Heart right ventricle (tissue), 16 donors: ENCODE measurements at regions of chr4 and their contacts with region 1.

Region 1: GRCh38 chr4:139734875-139735380 is 69.3 kb downstream of the MGST2 start:
- DNase-seq: peak; percentile 90 to 91
- ATAC-seq: peak; percentile 94 to 97 (median 94)
- H3K4me3 ChIP-seq: peak overlapping the region; percentile 34 to 66 (median 59)
- H3K27ac ChIP-seq: peak overlapping the region; percentile 78 to 93 (median 86)
- H3K4me1 ChIP-seq: peaks cover 11 to 62% (median 50%) of the 10 kb centered on the region in 9 donors
- H3K27me3 ChIP-seq: no peaks in the 10 kb centered on the region
- CTCF ChIP-seq: peak; percentile 81 to 98 (median 92)

Region 2: GRCh38 chr4:139660568-139661043 is 74.3 kb before region 1 on chr4:
- intact Hi-C with region 1: loop called in 1 of 10 experiments (anchors 5 kb)
- DNase-seq: no peak
- ATAC-seq: peak in 5 of 8 donors; percentile 33 to 63 (median 43)
- H3K4me3 ChIP-seq: no peak overlapping the region
- H3K27ac ChIP-seq: peak overlapping the region in 5 of 10 donors; percentile 32 to 75 (median 42)
- H3K4me1 ChIP-seq: peaks cover 0 to 54% (median 33%) of the 10 kb centered on the region in 9 donors
- H3K27me3 ChIP-seq: no peaks in the 10 kb centered on the region
- CTCF ChIP-seq: no peak

Region 3: GRCh38 chr4:139919521-139919920 is 184.6 kb after region 1 on chr4:
- intact Hi-C with region 1: loop called in 1 of 10 experiments (anchors 5 kb)
- DNase-seq: peak in 1 of 2 donors; percentile 33
- ATAC-seq: peak in 7 of 8 donors; percentile 58 to 87 (median 80)
- H3K4me3 ChIP-seq: peak overlapping the region in 1 of 10 donors; percentile 15
- H3K27ac ChIP-seq: peak overlapping the region; percentile 35 to 88 (median 76)
- H3K4me1 ChIP-seq: peaks cover 15 to 88% (median 66%) of the 10 kb centered on the region in 9 donors
- H3K27me3 ChIP-seq: no peaks in the 10 kb centered on the region
- CTCF ChIP-seq: no peak

Region 4: GRCh38 chr4:140012688-140013486 is 278.0 kb after region 1 on chr4:
- intact Hi-C with region 1: loop called in 3 of 10 experiments (anchors 5 to 10 kb)
- DNase-seq: peak; percentile 19 to 66
- ATAC-seq: peak; percentile 44 to 94 (median 89)
- H3K4me3 ChIP-seq: peak overlapping the region in 1 of 10 donors; percentile 17
- H3K27ac ChIP-seq: no peak overlapping the region
- H3K4me1 ChIP-seq: peaks cover 0 to 12% (median 0%) of the 10 kb centered on the region in 9 donors
- H3K27me3 ChIP-seq: no peaks in the 10 kb centered on the region
- CTCF ChIP-seq: peak; percentile 29 to 73 (median 65)

Region 5: DNA sequence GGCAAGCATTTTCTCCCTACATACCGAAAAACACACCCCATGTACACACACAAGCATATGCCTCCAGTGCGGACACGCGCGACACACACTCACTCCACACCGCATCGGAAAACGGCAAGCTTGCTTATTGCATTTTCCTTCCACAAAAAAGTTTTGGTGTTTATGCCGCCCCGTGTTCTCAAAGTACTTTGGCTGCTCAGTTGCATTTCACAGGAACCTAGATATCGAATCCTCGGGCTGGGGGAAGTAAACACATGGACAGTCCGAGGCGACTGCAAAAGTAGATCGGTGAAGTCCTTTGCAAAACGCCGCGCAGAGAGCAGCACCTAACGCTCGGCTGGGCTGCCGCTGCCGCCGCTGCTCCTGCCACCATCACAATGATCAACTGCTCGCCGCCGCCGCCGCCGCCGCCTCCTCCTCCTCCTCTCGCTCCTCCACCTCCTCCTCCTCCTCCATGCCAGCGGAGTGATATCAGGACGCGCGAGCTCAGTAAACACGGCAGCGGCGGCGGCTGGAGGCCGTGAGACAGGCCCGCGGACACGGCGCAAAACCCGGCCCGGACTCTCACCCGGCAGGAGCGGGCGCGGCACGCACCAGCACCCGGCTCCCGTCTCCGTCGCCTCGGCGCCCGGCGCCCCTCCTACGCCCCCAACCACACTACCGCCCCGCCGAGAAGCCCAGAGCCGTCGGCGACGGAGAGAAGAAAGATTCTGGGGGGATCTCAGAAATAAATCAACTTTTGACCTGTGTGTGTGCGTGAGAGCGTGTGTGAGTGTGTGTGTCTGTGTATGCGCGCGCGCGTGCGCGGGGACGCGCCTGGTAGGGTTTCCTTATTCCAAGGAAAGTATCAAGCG is 419.0 kb after region 1 on chr4 and contains the start of gene MAML3:
- intact Hi-C with region 1: loop called in 7 of 10 experiments (anchors 2 to 5 kb)
- DNase-seq: peak; percentile 95
- ATAC-seq: peak; percentile 62 to 83 (median 74)
- H3K4me3 ChIP-seq: peak within 1 kb of the TSS; percentile 65 to 92 (median 84)
- H3K27ac ChIP-seq: peak within 1 kb of the TSS; percentile 85 to 100 (median 99)
- H3K4me1 ChIP-seq: peaks cover 0 to 44% (median 7%) of the 10 kb centered on the region in 9 donors
- H3K27me3 ChIP-seq: no peaks in the 10 kb centered on the region
- CTCF ChIP-seq: no peak
- total RNA-seq, gene MAML3: 1.3 to 4.6 (median 2.8) TPM

Region 6: GRCh38 chr4:140233791-140234696 is 499.1 kb after region 1 on chr4:
- intact Hi-C with region 1: no loop called
- DNase-seq: no peak
- ATAC-seq: no peak
- H3K4me3 ChIP-seq: no peak overlapping the region
- H3K27ac ChIP-seq: no peak overlapping the region
- H3K4me1 ChIP-seq: peaks cover 10 to 30% (median 27%) of the 10 kb centered on the region in 9 donors
- H3K27me3 ChIP-seq: no peaks in the 10 kb centered on the region
- CTCF ChIP-seq: no peak